ENCODE measurements at regions of chr5 and their contacts with region 1.

Region 1: DNA sequence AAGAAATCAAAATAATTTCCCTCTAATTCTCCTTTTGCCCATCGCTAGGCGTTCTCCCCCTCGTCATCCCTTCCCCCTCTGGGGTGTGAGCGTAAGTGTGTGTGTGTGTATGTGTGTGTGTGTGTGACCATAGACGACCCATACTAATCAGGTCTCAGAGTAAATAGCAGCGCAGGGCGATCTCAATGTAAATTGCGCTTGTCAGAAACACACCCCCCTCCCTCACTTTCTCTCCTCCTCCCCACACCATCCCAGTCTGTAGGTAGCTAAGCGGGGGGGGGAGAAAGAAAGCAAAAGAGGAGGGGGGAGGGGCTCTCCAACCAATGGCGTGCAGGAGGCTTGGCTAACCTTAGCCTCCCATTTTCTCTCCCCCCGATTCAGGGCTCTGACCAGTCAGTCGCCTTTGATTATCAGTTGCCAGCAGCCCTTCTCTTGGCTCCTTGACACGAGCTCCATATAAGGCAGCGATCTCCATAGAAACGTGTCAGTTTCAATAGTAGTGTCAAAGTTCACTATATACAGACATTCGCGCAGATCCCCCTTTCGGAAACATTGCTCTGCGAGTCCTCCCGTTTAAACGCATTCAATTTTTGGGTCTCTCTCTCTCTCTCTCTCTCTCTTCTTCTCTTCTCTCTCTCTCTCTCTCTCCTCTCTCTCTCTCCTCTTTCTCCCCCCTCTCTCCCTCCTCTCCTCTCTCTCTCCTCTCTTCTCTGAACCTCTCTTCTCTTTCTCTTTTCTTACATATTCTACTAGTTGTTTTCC is at the start of gene NR2F1:
- DNase-seq: peak; percentile 98
- ATAC-seq: peak; percentile 50
- H3K4me3 ChIP-seq: peak within 1 kb of the TSS; percentile 86
- H3K27ac ChIP-seq: peak within 1 kb of the TSS; percentile 70
- H3K4me1 ChIP-seq: peaks cover 20% of the 10 kb centered on the region
- H3K27me3 ChIP-seq: no peaks in the 10 kb centered on the region
- CTCF ChIP-seq: no peak
- total RNA-seq, gene NR2F1: 88.4 and 118 TPM in 2 replicates

Region 2: DNA sequence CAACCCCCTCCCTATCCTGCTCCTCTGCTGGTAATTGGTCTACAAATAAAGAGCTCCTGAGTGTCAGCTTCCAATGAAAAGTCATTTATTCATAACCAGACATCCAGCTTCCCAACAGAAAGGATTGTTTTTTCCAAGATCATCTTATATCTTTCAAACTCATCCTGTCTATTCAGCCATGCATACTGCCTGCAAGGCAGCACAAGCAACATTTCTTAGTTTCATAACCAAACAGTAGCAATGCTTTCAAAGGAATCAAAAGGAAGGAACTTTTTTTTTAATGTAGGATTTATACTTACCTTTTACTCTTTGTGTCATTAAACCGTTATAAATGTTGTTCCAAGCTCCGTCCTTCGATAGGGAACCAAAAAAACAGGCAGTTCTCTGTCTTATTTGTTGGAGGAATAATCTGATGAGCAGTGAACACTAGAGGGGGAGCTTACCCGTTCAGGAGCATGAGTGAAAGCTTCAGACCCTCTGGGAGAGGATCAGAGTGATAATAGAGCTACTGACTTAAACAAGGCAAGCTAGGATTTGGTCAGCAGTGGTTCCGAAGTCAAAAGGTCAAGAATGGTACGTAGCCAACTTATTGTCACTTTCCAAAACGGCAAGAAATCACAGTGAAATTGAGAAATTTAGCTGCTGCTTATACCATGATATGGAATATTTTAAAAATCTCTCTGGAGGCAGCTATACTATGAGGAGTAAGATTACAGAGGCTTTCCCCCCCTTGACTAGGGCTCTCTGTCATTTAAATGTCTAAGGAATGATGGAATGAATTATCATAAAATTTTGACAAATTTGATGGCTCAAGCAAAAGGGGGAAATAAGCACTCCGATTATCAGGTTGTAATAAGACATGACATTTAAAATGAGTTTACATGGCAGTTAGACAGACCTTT is 894.8 kb before region 1 on chr5:
- CTCF ChIA-PET with region 1: no interaction called
- POLR2A ChIA-PET with region 1: interaction called, 10 read pairs
- intact Hi-C with region 1: loop called (anchors 10 kb)
- DNase-seq: peak; percentile 43
- ATAC-seq: peak; percentile 74
- H3K4me3 ChIP-seq: no peak overlapping the region
- H3K27ac ChIP-seq: no peak overlapping the region
- H3K4me1 ChIP-seq: no peaks in the 10 kb centered on the region; the same call in 1 of the 2 replicates
- H3K27me3 ChIP-seq: no peaks in the 10 kb centered on the region
- CTCF ChIP-seq: peak; percentile 62

Region 3: GRCh38 chr5:93092349-93093105 is 490.3 kb before region 1 on chr5:
- CTCF ChIA-PET with region 1: interaction called, 4 read pairs
- POLR2A ChIA-PET with region 1: no interaction called
- intact Hi-C with region 1: loop called (anchors 2 kb)
- DNase-seq: peak; percentile 65
- ATAC-seq: peak; percentile 87
- H3K4me3 ChIP-seq: no peak overlapping the region
- H3K27ac ChIP-seq: peak overlapping the region; percentile 24; the same call in 1 of the 2 replicates
- H3K4me1 ChIP-seq: peaks cover 14% of the 10 kb centered on the region
- H3K27me3 ChIP-seq: no peaks in the 10 kb centered on the region
- CTCF ChIP-seq: peak; percentile 74

Region 4: GRCh38 chr5:93249651-93250289 is 333.1 kb before region 1 on chr5:
- CTCF ChIA-PET with region 1: no interaction called
- POLR2A ChIA-PET with region 1: no interaction called
- intact Hi-C with region 1: loop called (anchors 5 kb)
- DNase-seq: peak; percentile 76
- ATAC-seq: peak; percentile 72
- H3K4me3 ChIP-seq: peak overlapping the region; percentile 40; the same call in 1 of the 2 replicates
- H3K27ac ChIP-seq: peak overlapping the region; percentile 93
- H3K4me1 ChIP-seq: peaks cover 36% of the 10 kb centered on the region
- H3K27me3 ChIP-seq: no peaks in the 10 kb centered on the region
- CTCF ChIP-seq: no peak

Region 5: DNA sequence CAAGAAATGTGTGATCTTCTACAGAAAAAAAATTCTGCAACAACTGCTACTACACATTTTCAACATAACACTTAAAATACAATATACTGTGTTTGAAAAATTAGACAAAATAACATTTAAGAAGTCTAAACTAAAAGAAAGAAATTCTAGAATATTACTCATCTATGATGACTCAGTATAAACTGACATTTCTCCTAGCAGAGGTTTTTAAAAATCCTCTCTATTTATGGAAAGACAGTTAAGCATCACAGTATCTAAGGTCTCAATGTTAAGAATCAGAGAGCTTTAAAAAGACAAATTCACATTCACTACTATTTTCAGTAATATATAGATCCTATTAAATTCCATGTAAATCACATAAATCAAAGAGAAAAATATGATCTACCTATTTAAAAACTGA is 63.1 kb before region 1 on chr5:
- CTCF ChIA-PET with region 1: no interaction called
- POLR2A ChIA-PET with region 1: no interaction called
- intact Hi-C with region 1: loop called (anchors 5 kb)
- DNase-seq: peak; percentile 32
- ATAC-seq: peak; percentile 71
- H3K4me3 ChIP-seq: no peak overlapping the region
- H3K27ac ChIP-seq: peak overlapping the region; percentile 7; the same call in 1 of the 2 replicates
- H3K4me1 ChIP-seq: peaks cover 20% of the 10 kb centered on the region
- H3K27me3 ChIP-seq: no peaks in the 10 kb centered on the region
- CTCF ChIP-seq: no peak

Region 6: GRCh38 chr5:93909356-93909755 is 326.5 kb after region 1 on chr5:
- CTCF ChIA-PET with region 1: no interaction called
- POLR2A ChIA-PET with region 1: no interaction called
- intact Hi-C with region 1: loop called (anchors 1 kb)
- DNase-seq: peak; percentile 53
- ATAC-seq: 0 out of 2 replicates have a peak, but pooled peaks have one; percentile 35
- H3K4me3 ChIP-seq: no peak overlapping the region
- H3K27ac ChIP-seq: no peak overlapping the region
- H3K4me1 ChIP-seq: no peaks in the 10 kb centered on the region
- H3K27me3 ChIP-seq: no peaks in the 10 kb centered on the region
- CTCF ChIP-seq: peak; percentile 58